PC-9 (cell line): ENCODE measurements at regions of chr16 and their contacts with region 1.

Region 1: GRCh38 chr16:9695163-9695562 is 487.1 kb downstream of the GRIN2A start:
- DNase-seq: no peak
- H3K4me3 ChIP-seq: no peak overlapping the region
- H3K27ac ChIP-seq: no peak overlapping the region
- H3K4me1 ChIP-seq: no peaks in the 10 kb centered on the region
- H3K27me3 ChIP-seq: no peaks in the 10 kb centered on the region
- CTCF ChIP-seq: no peak

Region 2: GRCh38 chr16:9192746-9193145 is 502.4 kb before region 1 on chr16:
- CTCF ChIA-PET with region 1: no interaction called
- POLR2A ChIA-PET with region 1: interaction called, 10 read pairs
- intact Hi-C with region 1: no loop called
- DNase-seq: no peak
- H3K4me3 ChIP-seq: no peak overlapping the region
- H3K27ac ChIP-seq: no peak overlapping the region
- H3K4me1 ChIP-seq: no peaks in the 10 kb centered on the region
- H3K27me3 ChIP-seq: peaks cover 54% of the 10 kb centered on the region
- CTCF ChIP-seq: no peak